Right cardiac atrium (tissue), 5 donors: ENCODE measurements at regions of chr17 and their contacts with region 1.

Region 1: DNA sequence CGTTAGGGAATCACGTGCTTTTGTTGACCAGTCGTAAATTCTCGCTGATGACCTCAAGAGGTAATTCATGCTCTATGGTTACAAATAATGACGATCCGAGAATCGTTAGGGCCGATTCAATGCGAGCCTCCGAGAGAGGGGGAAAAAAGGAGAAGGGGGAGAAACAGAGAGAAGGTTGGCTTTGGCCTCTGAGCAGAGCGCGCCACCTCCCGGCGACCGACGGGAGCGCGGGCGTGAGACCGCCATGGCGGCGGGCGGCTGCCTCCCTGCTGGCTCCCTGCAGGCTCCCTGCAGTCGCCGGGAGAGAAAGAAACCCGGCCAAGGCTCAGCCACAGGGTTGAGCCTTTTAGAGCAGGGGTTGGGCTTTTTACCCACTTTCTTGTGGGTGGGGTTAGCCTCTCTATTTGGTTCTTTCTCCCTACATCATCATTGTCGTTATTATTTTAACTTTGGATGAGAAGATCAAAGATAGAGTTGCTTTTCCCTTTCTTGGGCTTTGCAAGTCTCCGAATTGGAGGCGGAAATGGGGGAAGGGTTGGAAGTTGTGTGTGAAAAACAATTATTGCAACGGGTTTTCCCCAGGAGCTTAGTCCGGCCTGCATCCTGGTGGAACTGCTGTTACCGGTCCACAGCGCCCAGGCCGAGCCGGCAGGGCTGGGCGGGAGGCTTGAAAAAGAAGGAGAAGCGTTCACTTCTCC is 410 bp upstream of the HOXB5 start:
- DNase-seq: peak; percentile 69 to 91 (median 90)
- ATAC-seq: peak; percentile 56 to 68
- H3K4me3 ChIP-seq: peak overlapping the region; percentile 6
- H3K27ac ChIP-seq: no peak overlapping the region
- H3K4me1 ChIP-seq: peaks cover 4% of the 10 kb centered on the region
- H3K27me3 ChIP-seq: no peaks in the 10 kb centered on the region

Region 2: GRCh38 chr17:48335858-48336500 is 258.0 kb before region 1 on chr17:
- intact Hi-C with region 1: loop called in 1 of 4 experiments (anchors 10 kb)
- DNase-seq: no peak
- ATAC-seq: no peak
- H3K4me3 ChIP-seq: no peak overlapping the region
- H3K27ac ChIP-seq: no peak overlapping the region
- H3K4me1 ChIP-seq: no peaks in the 10 kb centered on the region
- H3K27me3 ChIP-seq: peaks cover 7% of the 10 kb centered on the region

Region 3: GRCh38 chr17:48351831-48352332 is 242.1 kb before region 1 on chr17:
- intact Hi-C with region 1: loop called in 1 of 4 experiments (anchors 10 kb)
- DNase-seq: no peak
- ATAC-seq: no peak
- H3K4me3 ChIP-seq: no peak overlapping the region
- H3K27ac ChIP-seq: no peak overlapping the region
- H3K4me1 ChIP-seq: no peaks in the 10 kb centered on the region
- H3K27me3 ChIP-seq: no peaks in the 10 kb centered on the region

Region 4: GRCh38 chr17:48492401-48493298 is 101.3 kb before region 1 on chr17:
- intact Hi-C with region 1: no loop called
- DNase-seq: peak; percentile 74 to 91 (median 87)
- ATAC-seq: peak; percentile 95
- H3K4me3 ChIP-seq: peak overlapping the region; percentile 26
- H3K27ac ChIP-seq: no peak overlapping the region
- H3K4me1 ChIP-seq: no peaks in the 10 kb centered on the region
- H3K27me3 ChIP-seq: peaks cover 2% of the 10 kb centered on the region

Region 5: DNA sequence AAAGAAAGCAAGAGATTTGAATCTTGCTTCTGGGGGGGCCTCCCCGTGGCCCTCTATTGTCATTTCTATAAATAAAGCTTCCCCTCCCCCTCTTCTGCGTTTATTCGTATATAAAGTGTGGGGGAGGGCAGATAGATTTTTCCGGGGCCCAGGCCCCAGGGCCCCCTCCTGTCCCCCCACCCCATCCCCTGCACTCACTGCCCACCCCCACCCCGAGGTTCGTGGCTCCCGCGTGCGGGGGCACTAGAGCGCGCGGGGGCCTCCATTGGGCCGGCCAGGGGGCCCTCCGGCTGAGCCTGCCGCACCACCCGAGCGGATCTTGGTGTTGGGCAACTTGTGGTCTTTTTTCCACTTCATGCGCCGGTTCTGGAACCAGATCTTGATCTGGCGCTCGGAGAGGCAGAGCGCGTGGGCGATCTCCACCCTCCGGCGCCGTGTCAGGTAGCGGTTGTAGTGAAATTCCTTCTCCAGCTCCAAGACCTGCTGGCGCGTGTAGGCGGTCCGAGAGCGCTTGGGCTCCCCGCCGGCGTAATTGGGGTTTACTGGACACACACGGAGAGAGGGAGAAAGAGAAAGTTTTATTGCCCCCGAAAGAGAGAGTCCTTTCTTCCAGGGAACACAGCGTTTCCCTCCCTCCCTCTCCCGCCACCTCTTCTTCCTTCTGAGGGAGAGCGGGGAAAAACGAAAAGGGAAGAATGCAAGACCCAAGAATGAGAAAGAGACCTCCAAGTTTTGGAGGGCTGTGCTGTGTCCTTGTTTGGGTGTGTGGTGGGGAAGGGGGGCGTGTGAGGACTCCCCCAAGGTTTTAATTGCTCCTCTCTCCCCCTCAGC is 17.3 kb before region 1 on chr17:
- intact Hi-C with region 1: no loop called
- DNase-seq: peak in 1 of 3 donors; percentile 36
- ATAC-seq: no peak
- H3K4me3 ChIP-seq: peak overlapping the region; percentile 78
- H3K27ac ChIP-seq: peak overlapping the region; percentile 3
- H3K4me1 ChIP-seq: no peaks in the 10 kb centered on the region
- H3K27me3 ChIP-seq: peaks cover 5% of the 10 kb centered on the region